ENCODE measurements at regions of chr4 and their contacts with region 1.

Region 1: DNA sequence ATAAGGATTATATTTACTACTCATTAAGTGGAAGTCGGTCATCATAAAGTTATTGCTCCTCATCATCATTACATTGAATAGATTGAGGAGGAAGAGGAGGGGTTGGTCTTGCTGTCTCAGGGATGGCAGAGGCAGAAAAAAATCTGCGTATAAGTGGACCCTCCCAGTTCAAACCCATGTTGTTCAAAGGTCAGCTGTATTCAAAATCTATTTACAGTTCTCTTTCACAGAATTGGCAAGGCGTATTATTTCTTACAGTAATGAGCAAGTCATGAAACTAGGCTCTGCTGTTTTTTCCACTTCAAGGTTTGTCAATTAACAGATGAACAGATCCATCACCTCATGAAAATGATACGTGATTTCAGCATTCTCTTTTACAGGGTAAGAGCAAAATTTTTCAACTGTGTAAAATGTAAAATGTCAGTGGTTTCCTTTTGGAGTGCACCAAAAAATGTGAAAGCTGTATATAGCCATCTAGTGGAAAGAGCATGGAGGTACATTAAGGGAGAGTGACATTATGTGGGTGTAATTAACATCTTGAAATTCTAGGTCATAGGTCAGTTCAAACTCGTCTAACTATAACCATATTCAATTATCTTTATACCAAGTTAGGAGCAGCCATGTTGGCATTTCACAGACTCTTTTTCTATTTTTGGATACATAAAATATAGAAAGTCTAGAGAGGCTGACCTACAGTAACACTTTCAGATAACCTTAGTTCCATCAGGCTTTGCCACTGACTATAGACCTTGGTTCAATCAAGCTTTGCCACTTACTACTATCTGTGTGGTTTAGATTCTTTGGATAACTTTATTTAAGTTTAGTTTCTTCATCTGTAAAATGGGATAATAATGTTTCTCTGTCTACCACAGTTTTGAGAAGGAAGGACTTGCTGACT is 30.1 kb downstream of the NEIL3 start:
- DNase-seq: peak; percentile 27

Region 2: GRCh38 chr4:177250056-177250696 is 89.5 kb before region 1 on chr4:
- CTCF ChIA-PET with region 1: interaction called, 10 read pairs
- POLR2A ChIA-PET with region 1: no interaction called
- DNase-seq: peak; percentile 81

Region 3: DNA sequence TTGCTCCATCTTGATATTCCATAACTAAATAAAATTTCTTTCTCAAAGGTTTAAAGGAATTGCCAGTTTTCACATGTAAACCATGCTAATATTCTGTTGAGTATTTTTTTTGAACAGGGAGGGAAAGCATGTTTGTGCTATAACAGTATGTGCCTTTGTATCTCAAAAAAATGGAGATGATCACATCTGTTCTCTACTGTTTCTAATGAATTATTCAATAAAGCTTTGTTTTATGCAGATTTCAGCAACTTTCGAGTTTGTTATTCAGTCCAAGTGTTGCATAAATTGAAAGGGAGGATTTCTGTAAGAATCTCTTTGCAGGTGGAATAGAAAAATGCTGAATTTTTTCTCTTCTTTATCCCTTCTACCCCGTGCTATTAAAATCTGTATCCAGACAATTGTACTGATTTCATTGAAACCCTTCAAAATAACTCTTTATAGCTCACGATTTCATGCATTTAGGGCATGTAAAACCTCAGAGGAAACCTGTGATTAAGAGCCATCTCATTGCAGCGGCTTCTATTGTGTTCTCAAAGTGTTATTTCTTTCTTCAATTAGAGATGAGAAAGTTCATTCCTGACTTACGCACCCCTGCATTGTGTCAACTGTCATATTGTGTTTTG is 12.0 kb after region 1 on chr4:
- CTCF ChIA-PET with region 1: no interaction called
- POLR2A ChIA-PET with region 1: no interaction called
- DNase-seq: no peak